Adrenal gland (tissue), 19 donors: ENCODE measurements at regions of chr9 and their contacts with region 1.

Region 1: DNA sequence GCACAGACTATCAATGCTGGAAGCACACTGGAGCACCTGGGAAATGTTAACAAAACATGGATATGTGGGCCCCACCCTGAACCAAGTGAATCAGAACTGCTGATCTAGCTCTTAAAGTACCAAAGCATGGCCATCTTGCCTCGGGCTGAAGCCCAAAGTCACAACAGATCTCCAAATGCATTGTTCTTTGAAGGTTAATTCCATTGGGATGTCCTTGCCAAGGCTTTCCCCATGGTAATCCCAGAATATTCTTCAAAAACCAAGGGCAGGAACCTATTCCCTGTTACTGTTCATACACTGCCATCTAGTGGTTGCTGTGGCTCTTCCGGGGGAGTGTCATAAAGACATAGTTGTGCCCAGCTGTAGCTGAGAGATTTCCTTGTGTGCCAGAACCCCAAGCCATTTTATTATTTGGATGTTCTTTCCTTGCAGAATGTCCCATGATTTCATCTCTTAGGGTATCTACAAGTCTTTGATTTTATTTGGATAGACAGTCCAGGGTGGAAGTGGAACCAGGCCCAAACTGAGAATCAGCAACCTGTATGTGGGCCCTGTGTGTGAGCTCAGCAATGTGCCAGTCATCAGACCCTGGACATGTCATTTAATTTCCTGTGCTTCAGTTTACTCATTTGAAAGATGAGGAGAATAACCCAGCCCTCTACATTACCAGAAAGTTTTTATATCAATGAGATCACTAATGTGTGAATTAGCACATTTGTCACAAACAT is 290.0 kb downstream of the ACTL7B start:
- DNase-seq: peak; percentile 51 to 77 (median 59)
- H3K4me3 ChIP-seq: no peak overlapping the region
- H3K27ac ChIP-seq: no peak overlapping the region
- H3K4me1 ChIP-seq: no peaks in the 10 kb centered on the region
- H3K27me3 ChIP-seq: peaks cover 6% of the 10 kb centered on the region
- CTCF ChIP-seq: peak; percentile 81 to 92 (median 86)
- POLR2A ChIP-seq: no peak

Region 2: DNA sequence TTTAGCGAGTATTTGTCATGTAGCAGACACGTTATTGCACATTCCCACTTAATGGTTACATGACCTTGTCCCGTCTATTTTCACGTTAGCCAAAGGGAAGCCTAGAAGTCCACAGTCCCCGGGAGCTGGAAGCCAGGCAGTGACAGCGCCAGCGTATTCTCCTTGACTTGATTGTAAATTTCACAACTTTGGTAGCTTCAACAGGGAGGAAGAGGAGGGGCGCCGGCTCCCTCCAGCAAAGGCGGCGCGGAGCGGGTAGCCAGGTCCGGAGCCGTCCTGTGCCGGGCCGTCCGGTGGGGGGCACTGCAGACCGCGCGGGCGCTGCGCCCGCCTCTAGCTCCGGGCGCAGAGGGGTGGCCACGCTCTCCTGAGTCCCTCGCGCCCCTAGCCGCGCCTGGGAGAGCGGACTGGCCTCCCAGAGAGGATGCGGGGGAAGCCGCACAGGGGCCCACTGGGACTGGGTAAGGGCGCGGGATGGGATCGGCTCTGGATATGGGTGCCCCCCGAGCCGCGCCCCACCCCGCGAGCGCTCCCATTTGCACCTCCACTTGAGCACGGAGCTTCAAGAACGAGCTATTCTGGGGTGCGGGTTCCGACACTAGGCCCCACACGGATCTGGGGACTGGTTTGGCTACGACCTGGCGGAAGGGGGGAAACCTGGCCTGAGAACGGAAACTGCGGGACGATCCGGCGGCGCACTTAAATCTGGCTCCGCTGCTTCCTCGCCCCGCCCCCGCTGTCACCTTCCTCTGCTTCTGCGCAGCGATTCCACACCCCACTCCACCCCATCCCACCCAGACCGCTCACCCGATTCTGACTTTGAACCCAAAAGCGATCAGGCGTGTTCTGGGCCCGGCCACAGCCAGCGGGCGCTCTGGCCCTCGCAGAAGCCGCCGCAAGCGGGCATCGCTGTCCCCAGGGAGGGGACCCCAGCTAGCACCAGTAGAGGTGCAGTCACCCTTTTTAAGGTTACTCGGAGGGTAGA is 1100.1 kb before region 1 on chr9:
- intact Hi-C with region 1: loop called (anchors 5 kb)
- DNase-seq: peak; percentile 43 to 74 (median 68)
- H3K4me3 ChIP-seq: peak overlapping the region in 3 of 4 donors; percentile 33 to 60 (median 40)
- H3K27ac ChIP-seq: no peak overlapping the region
- H3K4me1 ChIP-seq: peaks cover 10 to 13% of the 10 kb centered on the region in 2 donors
- H3K27me3 ChIP-seq: peaks cover 6% of the 10 kb centered on the region
- CTCF ChIP-seq: peak; percentile 42 to 92 (median 70)
- POLR2A ChIP-seq: no peak

Region 3: GRCh38 chr9:108057421-108058134 is 508.2 kb before region 1 on chr9:
- intact Hi-C with region 1: no loop called
- DNase-seq: peak in 6 of 7 donors; percentile 12 to 61 (median 42)
- H3K4me3 ChIP-seq: no peak overlapping the region
- H3K27ac ChIP-seq: peak overlapping the region in 1 of 5 donors; percentile 1
- H3K4me1 ChIP-seq: peaks cover 0 to 29% of the 10 kb centered on the region in 2 donors
- H3K27me3 ChIP-seq: peaks cover 6% of the 10 kb centered on the region
- CTCF ChIP-seq: no peak
- POLR2A ChIP-seq: no peak

Region 4: GRCh38 chr9:108478431-108478837 is 87.4 kb before region 1 on chr9:
- intact Hi-C with region 1: loop called in 1 of 2 experiments (anchors 10 kb)
- DNase-seq: peak; percentile 45 to 77 (median 70)
- H3K4me3 ChIP-seq: no peak overlapping the region
- H3K27ac ChIP-seq: peak overlapping the region in 3 of 5 donors; percentile 3 to 66 (median 26)
- H3K4me1 ChIP-seq: peaks cover 6 to 10% of the 10 kb centered on the region in 2 donors
- H3K27me3 ChIP-seq: no peaks in the 10 kb centered on the region
- CTCF ChIP-seq: peak in 3 of 6 experiments; percentile 8 to 13 (median 10)
- POLR2A ChIP-seq: no peak

Region 5: DNA sequence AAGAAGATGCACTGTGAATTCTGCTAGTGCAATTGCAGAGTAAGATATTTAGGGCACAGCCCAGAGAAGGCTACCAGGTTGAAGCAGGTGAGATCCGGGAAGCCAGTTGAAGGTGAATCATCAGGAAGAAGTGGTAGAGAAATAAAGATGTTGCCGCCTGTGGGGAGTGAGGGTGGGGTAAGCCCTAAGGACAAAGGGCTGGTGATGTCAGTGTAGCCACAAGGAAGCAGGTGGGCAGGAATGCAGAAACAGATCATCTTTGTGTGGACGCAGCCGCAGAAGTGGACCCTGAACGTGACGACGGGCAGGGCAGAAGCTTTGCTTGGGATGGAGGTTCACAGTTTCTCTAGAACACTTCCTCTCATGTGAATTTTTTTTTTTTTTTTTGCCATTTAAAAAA is 125.8 kb after region 1 on chr9:
- intact Hi-C with region 1: no loop called
- DNase-seq: no peak
- H3K4me3 ChIP-seq: no peak overlapping the region
- H3K27ac ChIP-seq: no peak overlapping the region
- H3K4me1 ChIP-seq: no peaks in the 10 kb centered on the region
- H3K27me3 ChIP-seq: no peaks in the 10 kb centered on the region
- CTCF ChIP-seq: no peak
- POLR2A ChIP-seq: no peak